Sciatic nerve (tissue), 2 donors: ENCODE measurements at regions of chr4 and their contacts with region 1.

Region 1: DNA sequence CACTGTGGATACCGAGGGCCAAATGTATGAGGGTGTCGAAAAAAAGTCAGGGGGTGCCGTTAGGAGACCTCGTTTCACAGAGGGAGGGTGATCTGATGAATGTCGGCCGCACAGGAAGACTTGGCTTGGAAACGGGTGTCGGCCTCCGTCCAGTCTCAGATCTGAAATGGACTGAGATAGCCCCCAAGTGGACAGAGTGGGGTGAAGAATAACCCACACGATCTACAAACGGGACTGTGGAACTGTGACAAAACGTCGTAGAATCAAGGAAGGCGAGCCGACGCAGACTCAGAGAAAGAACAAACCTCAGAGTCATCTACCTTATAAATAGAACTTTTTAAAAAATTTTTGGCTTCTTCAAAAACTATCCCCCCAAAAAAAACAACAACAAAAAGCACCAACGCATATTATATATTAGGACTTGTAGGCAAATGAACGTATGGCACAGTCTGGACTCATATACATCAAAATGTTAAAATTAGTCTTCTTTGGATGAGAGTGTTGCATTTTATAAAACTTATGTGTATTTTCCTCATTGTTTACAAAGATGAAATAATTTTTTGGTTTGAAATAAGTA is 63.8 kb upstream of the IRF2 start:
- DNase-seq: peak; percentile 93
- ATAC-seq: peak; percentile 97

Region 2: DNA sequence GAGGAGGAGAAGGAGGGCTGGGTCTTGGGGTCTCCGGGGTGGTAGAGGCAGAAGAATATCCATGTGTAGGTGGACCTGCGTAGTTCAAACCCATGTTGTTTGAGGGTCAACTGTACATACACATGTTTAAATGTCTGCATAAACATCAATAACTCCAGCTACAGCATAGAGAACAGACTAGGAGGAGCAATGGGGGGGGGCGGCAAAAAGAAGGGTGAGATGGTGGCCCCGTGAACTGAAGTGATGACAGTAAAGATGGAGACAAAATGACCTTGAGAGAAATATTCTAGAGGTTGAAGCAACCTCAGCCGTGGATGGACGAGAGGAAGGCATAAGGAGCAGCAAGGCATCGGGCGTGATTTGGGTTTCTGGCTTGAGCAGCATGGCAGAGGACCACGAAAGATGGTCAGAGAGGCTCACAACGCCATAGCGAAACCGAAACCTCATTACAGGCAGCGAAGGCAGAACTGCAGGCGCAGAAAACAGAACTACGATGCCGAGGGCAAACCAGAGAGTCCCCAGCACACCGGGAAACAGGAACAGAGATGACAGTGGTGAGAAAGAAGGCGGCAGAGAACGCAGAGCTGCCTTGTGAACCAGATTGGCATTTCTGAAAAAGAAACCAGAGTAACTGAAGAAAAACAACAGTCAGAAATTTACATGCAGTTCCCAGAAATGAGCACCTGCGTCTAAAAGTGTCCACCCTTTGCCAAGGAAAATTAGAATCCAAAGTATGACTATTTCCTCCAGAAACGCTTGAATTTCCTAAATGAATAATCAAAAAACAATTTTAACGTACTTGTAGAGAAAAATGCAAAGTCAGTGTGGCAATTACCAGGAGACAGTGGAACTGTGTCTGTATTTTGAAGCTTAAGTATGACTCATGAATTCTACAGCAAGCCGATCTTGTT is 270.2 kb before region 1 on chr4:
- intact Hi-C with region 1: loop called (anchors 5 kb)
- DNase-seq: no peak
- ATAC-seq: peak; percentile 72

Region 3: GRCh38 chr4:184474263-184475095 is 63.6 kb before region 1 on chr4 and contains the start of gene IRF2:
- intact Hi-C with region 1: loop called (anchors 10 kb)
- DNase-seq: peak; percentile 98
- ATAC-seq: peak; percentile 97
- total RNA-seq, gene IRF2: 50.2 TPM